ENCODE measurements at regions of chr11 and their contacts with region 1.

Region 1: GRCh38 chr11:77027270-77027669 is 6.9 kb upstream of the B3GNT6 start:
- DNase-seq: peak; percentile 46
- H3K4me3 ChIP-seq: no peak overlapping the region
- H3K27me3 ChIP-seq: peaks cover 2% of the 10 kb centered on the region; the same call in 1 of the 2 replicates
- CTCF ChIP-seq: no peak

Region 2: DNA sequence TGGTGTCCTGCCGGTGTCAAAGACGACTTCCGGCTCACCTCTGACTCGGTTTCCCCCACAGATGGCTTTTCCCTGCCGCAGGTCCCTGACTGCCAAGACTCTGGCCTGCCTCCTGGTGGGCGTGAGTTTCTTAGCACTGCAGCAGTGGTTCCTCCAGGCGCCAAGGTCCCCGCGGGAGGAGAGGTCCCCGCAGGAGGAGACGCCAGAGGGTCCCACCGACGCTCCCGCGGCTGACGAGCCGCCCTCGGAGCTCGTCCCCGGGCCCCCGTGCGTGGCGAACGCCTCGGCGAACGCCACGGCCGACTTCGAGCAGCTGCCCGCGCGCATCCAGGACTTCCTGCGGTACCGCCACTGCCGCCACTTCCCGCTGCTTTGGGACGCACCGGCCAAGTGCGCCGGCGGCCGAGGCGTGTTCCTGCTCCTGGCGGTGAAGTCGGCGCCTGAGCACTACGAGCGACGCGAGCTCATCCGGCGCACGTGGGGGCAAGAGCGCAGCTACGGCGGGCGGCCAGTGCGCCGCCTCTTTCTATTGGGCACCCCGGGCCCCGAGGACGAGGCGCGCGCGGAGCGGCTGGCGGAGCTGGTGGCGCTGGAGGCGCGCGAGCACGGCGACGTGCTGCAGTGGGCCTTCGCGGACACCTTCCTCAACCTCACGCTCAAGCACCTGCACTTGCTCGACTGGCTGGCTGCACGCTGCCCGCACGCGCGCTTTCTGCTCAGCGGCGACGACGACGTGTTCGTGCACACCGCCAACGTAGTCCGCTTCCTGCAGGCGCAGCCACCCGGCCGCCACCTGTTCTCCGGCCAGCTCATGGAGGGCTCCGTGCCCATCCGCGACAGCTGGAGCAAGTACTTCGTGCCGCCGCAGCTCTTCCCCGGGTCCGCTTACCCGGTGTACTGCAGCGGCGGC is 12.5 kb after region 1 on chr11:
- CTCF ChIA-PET with region 1: interaction called, 14 read pairs
- POLR2A ChIA-PET with region 1: no interaction called
- DNase-seq: no peak
- H3K4me3 ChIP-seq: peak overlapping the region; percentile 38
- H3K27me3 ChIP-seq: peaks cover 7% of the 10 kb centered on the region
- CTCF ChIP-seq: peak; percentile 69

Region 3: GRCh38 chr11:77211040-77211922 is 184.0 kb after region 1 on chr11:
- CTCF ChIA-PET with region 1: no interaction called
- POLR2A ChIA-PET with region 1: no interaction called
- DNase-seq: no peak
- H3K4me3 ChIP-seq: no peak overlapping the region
- H3K27me3 ChIP-seq: peaks cover 4% of the 10 kb centered on the region; the same call in 1 of the 2 replicates
- CTCF ChIP-seq: no peak